ENCODE measurements at regions of chr10 and their contacts with region 1.

Region 1: DNA sequence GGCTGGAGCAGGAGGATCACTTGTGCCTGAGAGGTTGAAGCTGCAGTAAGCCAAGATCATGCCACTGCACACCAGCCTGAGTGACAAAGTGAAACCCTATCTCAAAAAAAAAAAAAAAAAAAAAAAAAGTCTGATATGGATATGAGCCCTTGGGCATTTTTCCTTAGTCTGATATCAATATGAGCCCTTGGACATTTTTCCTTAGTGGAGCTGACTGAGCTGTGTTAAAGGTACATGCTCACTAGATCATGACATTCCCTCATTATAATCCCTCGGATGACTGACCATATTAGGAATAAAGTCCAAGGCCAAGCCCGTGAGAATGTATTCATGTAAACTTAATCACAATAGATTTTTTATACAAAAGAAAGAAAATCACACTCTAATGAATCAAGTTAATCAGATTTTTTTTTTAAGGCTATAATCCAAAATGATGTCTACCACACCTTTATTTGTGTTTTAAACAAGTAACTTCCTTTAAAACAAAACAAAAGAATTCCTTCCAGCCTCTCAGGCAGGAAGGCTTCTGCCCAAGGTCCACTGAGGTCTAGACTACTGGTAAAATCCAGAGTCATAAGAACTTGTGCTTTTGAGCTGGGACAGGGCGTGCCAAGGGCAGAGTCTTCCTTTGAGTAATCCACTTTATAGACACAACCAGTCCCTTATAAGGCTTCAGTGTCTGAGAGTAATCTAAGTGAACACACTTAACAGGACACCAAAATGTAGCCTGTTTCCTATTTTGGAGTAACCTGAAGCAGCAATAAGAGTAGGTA is 5.5 kb downstream of the PPA1 start:
- DNase-seq: no peak

Region 2: GRCh38 chr10:70212879-70213278 is 14.9 kb before region 1 on chr10:
- intact Hi-C with region 1: no loop called
- DNase-seq: no peak

Region 3: DNA sequence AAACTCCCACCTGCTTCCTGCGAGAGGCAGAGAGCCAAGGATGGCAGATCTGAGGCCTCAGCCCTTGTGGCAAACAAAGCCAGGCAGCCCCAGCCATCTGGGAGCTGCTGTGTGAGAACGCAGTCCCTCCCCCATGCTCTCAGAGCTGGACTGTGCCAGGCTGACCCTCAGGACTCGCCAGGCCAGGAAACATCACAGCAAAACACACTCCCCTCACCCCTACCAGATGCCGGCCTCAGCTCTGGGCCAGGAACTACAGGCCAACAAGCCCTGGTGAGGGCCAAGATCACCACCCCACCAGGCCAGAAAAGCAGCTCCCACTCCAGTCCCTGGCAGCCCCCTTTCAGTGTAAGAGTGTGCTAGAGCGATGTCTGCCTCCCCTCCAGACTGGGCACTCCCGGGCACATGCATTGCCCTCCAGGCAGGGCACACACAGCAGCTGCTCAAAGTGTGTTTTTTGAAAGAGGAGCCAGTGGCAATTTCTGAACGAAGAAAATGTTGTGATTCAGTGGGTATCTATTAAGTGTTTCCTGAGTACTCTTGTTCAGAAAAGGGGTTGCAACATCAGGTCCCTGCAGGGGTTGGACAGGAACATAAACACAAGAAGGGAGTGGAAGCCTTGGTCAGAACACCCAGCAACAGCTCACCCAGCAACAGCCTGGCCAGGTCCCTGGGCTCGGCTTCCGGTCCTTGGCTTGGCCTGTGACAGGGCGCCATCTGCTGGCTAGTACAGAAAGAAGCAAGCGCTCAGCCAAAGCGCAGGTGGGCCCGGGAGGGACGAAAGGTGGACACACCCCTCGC is 136.4 kb after region 1 on chr10:
- intact Hi-C with region 1: loop called (anchors 1 kb)
- DNase-seq: peak; percentile 95